ENCODE measurements at regions of chr12 and their contacts with region 1.

Region 1: GRCh38 chr12:10190558-10191388 is 11.9 kb downstream of the TMEM52B start:
- DNase-seq: peak; percentile 37 to 76
- ATAC-seq: peak; percentile 95 to 100 (median 99)
- H3K4me3 ChIP-seq: no peak overlapping the region
- H3K4me3 Mint-ChIP-seq: no peak overlapping the region
- H3K27ac ChIP-seq: no peak overlapping the region
- H3K27ac Mint-ChIP-seq: no peak overlapping the region
- H3K4me1 ChIP-seq: peaks cover 5% of the 10 kb centered on the region
- H3K4me1 Mint-ChIP-seq: peaks cover 13 to 20% of the 10 kb centered on the region in 2 donors
- H3K27me3 ChIP-seq: no peaks in the 10 kb centered on the region
- H3K27me3 Mint-ChIP-seq: peaks cover 7 to 27% of the 10 kb centered on the region in 2 donors
- CTCF ChIP-seq: peak; percentile 78

Region 2: GRCh38 chr12:9741726-9742125 is 449.0 kb before region 1 on chr12:
- intact Hi-C with region 1: loop called (anchors 5 kb)
- DNase-seq: peak; percentile 60 to 93
- ATAC-seq: peak; percentile 71 to 88 (median 82)
- H3K4me3 ChIP-seq: peak overlapping the region; percentile 21
- H3K4me3 Mint-ChIP-seq: peak overlapping the region; percentile 86
- H3K27ac ChIP-seq: peak overlapping the region; percentile 82
- H3K27ac Mint-ChIP-seq: peak overlapping the region; percentile 84 to 85
- H3K4me1 ChIP-seq: peaks cover 32% of the 10 kb centered on the region
- H3K4me1 Mint-ChIP-seq: peaks cover 52 to 53% of the 10 kb centered on the region in 2 donors
- H3K27me3 ChIP-seq: no peaks in the 10 kb centered on the region
- H3K27me3 Mint-ChIP-seq: no peaks in the 10 kb centered on the region
- CTCF ChIP-seq: no peak

Region 3: DNA sequence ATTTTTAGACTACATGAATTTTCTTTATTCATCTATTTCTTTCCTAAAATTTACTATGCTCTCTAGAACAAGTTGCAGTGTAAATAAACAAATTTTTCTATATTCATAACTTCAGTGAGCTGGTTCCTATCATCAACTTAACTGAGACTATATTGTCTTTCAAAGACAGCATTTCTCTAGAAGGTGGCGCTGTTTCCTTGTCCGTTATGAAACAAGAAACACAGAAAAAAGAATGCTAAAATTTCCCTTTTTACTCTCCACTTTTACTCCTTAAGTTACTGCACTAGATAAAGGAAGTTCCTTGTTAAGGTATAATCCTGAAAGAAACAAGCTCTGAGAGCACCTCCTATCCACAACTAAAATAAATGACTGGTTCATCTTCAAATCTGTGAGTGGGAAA is 250.4 kb before region 1 on chr12:
- intact Hi-C with region 1: loop called (anchors 5 kb)
- DNase-seq: peak in 1 of 2 donors; percentile 55
- ATAC-seq: peak in 1 of 3 donors; percentile 45
- H3K4me3 ChIP-seq: no peak overlapping the region
- H3K4me3 Mint-ChIP-seq: no peak overlapping the region
- H3K27ac ChIP-seq: no peak overlapping the region
- H3K27ac Mint-ChIP-seq: no peak overlapping the region
- H3K4me1 ChIP-seq: no peaks in the 10 kb centered on the region
- H3K4me1 Mint-ChIP-seq: peaks cover 7 to 11% of the 10 kb centered on the region in 2 donors
- H3K27me3 ChIP-seq: no peaks in the 10 kb centered on the region
- H3K27me3 Mint-ChIP-seq: no peaks in the 10 kb centered on the region
- CTCF ChIP-seq: peak; percentile 53

Region 4: DNA sequence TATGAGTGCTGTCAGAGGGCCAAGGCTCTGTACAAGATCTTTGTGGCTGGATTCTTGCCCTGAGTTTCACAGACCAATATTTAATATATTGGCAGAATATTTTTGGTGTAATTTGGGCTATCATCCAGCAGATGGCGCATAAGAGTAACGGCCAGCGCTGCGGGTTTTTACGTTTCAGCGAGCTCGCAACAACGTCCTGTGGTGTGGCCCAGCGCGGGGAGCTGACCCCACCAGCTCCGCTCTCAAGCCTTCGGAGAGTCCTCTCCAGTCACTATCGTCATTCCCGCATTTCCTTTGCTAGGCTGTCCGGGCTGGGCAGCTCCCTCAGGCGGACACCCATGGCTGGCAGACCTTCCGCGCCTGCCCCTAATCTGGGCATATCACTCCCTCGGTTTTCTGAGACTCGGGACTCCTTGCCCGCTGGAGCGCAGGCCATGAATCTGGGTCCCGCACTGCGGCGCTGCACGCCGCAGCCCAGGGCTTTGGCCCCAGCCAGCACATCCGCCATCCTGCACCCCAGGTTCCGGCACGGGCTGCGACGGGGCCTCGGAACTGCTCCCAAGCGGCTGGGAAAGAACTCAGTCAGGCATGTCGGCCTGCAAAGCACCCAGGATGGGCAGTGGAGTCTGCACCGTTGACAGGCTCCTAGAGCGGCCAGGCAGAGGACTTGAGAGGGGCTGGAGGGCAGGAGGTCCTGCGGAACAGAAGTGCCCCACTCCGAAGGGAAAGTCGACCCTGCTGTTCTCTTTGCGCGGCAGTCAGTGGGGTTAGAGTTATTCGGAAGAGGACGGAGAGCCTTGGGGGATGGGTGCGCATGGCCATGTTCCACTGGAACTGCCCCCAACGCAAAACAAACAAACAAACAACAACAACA is 37.3 kb before region 1 on chr12:
- intact Hi-C with region 1: loop called (anchors 1 kb)
- DNase-seq: peak; percentile 61 to 79
- ATAC-seq: peak; percentile 83 to 90 (median 88)
- H3K4me3 ChIP-seq: peak overlapping the region; percentile 64
- H3K4me3 Mint-ChIP-seq: peak overlapping the region; percentile 92
- H3K27ac ChIP-seq: peak overlapping the region; percentile 26
- H3K27ac Mint-ChIP-seq: peak overlapping the region in 1 of 2 donors; percentile 85
- H3K4me1 ChIP-seq: peaks cover 14% of the 10 kb centered on the region
- H3K4me1 Mint-ChIP-seq: peaks cover 15% of the 10 kb centered on the region in 2 donors
- H3K27me3 ChIP-seq: peaks cover 3% of the 10 kb centered on the region
- H3K27me3 Mint-ChIP-seq: peaks cover 7 to 11% of the 10 kb centered on the region in 2 donors
- CTCF ChIP-seq: peak; percentile 86

Region 5: GRCh38 chr12:10175846-10176636 is 14.7 kb before region 1 on chr12:
- intact Hi-C with region 1: no loop called
- DNase-seq: peak in 1 of 2 donors; percentile 7
- ATAC-seq: no peak
- H3K4me3 ChIP-seq: no peak overlapping the region
- H3K4me3 Mint-ChIP-seq: no peak overlapping the region
- H3K27ac ChIP-seq: no peak overlapping the region
- H3K27ac Mint-ChIP-seq: no peak overlapping the region
- H3K4me1 ChIP-seq: no peaks in the 10 kb centered on the region
- H3K4me1 Mint-ChIP-seq: no peaks in the 10 kb centered on the region
- H3K27me3 ChIP-seq: no peaks in the 10 kb centered on the region
- H3K27me3 Mint-ChIP-seq: peaks cover 20 to 41% of the 10 kb centered on the region in 2 donors
- CTCF ChIP-seq: no peak